ENCODE measurements at regions of chr12 and their contacts with region 1.

Region 1: GRCh38 chr12:1828863-1829262 is 8.5 kb downstream of the LRTM2 start:
- DNase-seq: no peak
- H3K4me3 ChIP-seq: no peak overlapping the region
- H3K27ac ChIP-seq: no peak overlapping the region
- H3K4me1 ChIP-seq: no peaks in the 10 kb centered on the region
- H3K27me3 ChIP-seq: no peaks in the 10 kb centered on the region
- CTCF ChIP-seq: no peak
- EP300 ChIP-seq: no peak
- POLR2A ChIP-seq: no peak

Region 2: DNA sequence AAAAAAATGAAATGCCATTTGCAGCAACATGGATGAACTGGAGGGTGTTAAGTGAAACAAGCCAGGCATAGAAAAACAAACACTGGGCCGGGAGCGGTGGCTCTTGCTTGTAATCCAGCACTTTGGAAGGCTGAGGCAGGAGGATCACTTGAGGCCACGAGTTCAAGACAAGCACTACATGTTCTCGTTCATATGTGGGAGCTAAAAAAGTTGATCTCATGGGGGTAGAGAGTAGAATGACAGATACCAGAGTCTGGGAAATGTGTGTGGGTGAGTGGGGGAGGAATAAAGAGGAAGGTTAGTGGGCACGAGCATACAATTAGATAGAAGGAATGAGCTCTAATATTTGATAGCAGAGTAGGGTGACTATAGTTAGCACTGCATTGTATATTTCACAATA is 68.1 kb after region 1 on chr12:
- intact Hi-C with region 1: no loop called
- DNase-seq: no peak
- H3K4me3 ChIP-seq: no peak overlapping the region
- H3K27ac ChIP-seq: no peak overlapping the region
- H3K4me1 ChIP-seq: no peaks in the 10 kb centered on the region
- H3K27me3 ChIP-seq: no peaks in the 10 kb centered on the region
- CTCF ChIP-seq: no peak
- EP300 ChIP-seq: no peak
- POLR2A ChIP-seq: no peak

Region 3: GRCh38 chr12:2118061-2118460 is 289.2 kb after region 1 on chr12:
- intact Hi-C with region 1: no loop called
- DNase-seq: no peak
- H3K4me3 ChIP-seq: no peak overlapping the region
- H3K27ac ChIP-seq: no peak overlapping the region
- H3K4me1 ChIP-seq: peaks cover 6% of the 10 kb centered on the region
- H3K27me3 ChIP-seq: no peaks in the 10 kb centered on the region
- CTCF ChIP-seq: no peak
- EP300 ChIP-seq: no peak
- POLR2A ChIP-seq: no peak

Region 4: DNA sequence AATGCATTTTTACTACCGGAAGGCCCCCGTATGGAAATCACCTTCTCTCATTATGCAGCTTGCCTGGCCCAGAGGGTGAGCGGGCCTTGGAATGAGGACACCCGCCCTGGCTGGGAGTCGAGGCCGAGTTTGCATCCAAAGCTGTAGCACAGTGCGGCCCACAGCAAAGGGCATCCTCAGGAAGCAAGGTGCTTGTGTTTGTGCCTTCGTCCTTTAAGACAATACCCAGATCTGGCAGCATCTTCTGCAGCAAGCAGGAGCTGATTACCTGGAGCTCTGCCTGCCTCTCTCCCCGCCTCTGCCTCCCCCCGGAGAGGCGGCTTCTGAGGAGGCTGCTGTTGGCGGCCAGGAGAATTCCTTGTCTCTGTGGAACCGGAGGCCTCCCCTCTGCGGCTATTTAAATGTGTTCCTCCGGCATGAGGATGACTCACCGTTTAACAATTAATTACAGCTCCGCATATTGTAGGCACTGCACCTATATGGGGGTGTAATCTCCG is 369.2 kb after region 1 on chr12:
- intact Hi-C with region 1: loop called in 1 of 4 experiments (anchors 5 kb)
- DNase-seq: peak in 3 of 5 donors; percentile 24 to 51 (median 45)
- H3K4me3 ChIP-seq: no peak overlapping the region
- H3K27ac ChIP-seq: no peak overlapping the region
- H3K4me1 ChIP-seq: peaks cover 5% of the 10 kb centered on the region
- H3K27me3 ChIP-seq: no peaks in the 10 kb centered on the region
- CTCF ChIP-seq: no peak
- EP300 ChIP-seq: no peak
- POLR2A ChIP-seq: no peak